ENCODE measurements at regions of chr2 and their contacts with region 1.

Region 1: GRCh38 chr2:181904022-181904632 is 12.6 kb downstream of the ITPRID2 start:
- DNase-seq: peak in 2 of 9 experiments; percentile 50 to 62
- ATAC-seq: peak; percentile 64
- H3K4me3 ChIP-seq: no peak overlapping the region
- H3K4me3 Mint-ChIP-seq: no peak overlapping the region
- H3K27ac ChIP-seq: no peak overlapping the region
- H3K27ac Mint-ChIP-seq: no peak overlapping the region
- H3K4me1 ChIP-seq: peaks cover 4% of the 10 kb centered on the region
- H3K4me1 Mint-ChIP-seq: peaks cover 25% of the 10 kb centered on the region
- H3K27me3 ChIP-seq: no peaks in the 10 kb centered on the region
- H3K27me3 Mint-ChIP-seq: no peaks in the 10 kb centered on the region
- CTCF ChIP-seq: peak; percentile 77

Region 2: GRCh38 chr2:180970016-180970415 is 934.1 kb before region 1 on chr2:
- CTCF ChIA-PET with region 1: no interaction called
- POLR2A ChIA-PET with region 1: no interaction called
- intact Hi-C with region 1: loop called in 1 of 2 experiments (anchors 5 kb)
- DNase-seq: no peak
- ATAC-seq: no peak
- H3K4me3 ChIP-seq: no peak overlapping the region
- H3K4me3 Mint-ChIP-seq: no peak overlapping the region
- H3K27ac ChIP-seq: no peak overlapping the region
- H3K27ac Mint-ChIP-seq: no peak overlapping the region
- H3K4me1 ChIP-seq: no peaks in the 10 kb centered on the region
- H3K4me1 Mint-ChIP-seq: no peaks in the 10 kb centered on the region
- H3K27me3 ChIP-seq: no peaks in the 10 kb centered on the region
- H3K27me3 Mint-ChIP-seq: no peaks in the 10 kb centered on the region
- CTCF ChIP-seq: no peak

Region 3: DNA sequence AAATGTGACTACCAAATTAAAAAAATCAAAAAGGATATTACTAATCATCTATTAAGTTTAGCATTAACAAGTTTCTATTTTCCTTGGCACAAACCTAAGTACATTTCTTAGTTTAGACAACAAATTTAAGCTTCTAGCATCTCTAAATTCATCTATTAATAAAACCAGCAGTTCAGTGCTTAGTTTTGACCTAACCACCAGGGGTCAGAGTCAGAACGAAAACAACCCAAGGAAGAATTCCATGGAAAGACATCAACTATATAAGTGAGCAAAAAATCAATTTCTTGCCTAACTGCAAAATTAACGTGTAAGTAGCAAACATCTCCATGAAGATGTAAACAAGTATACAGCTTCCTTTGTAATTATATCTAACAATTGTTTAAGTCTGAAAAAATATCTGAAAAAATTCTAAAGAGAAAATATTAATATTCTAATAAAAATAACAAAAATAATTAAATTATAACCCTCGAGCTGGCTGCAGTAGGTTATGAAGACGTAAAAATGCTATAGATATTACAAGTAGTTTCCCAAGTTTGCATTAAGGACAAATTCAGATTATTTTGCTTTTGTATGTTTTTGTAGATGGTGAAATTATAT is 330.9 kb before region 1 on chr2:
- CTCF ChIA-PET with region 1: no interaction called
- POLR2A ChIA-PET with region 1: no interaction called
- intact Hi-C with region 1: loop called in 1 of 2 experiments (anchors 10 kb)
- DNase-seq: peak in 2 of 9 experiments; percentile 11 to 28
- ATAC-seq: no peak
- H3K4me3 ChIP-seq: no peak overlapping the region
- H3K4me3 Mint-ChIP-seq: no peak overlapping the region
- H3K27ac ChIP-seq: no peak overlapping the region
- H3K27ac Mint-ChIP-seq: no peak overlapping the region
- H3K4me1 ChIP-seq: no peaks in the 10 kb centered on the region
- H3K4me1 Mint-ChIP-seq: no peaks in the 10 kb centered on the region
- H3K27me3 ChIP-seq: peaks cover 3% of the 10 kb centered on the region in 2 experiments
- H3K27me3 Mint-ChIP-seq: peaks cover 4% of the 10 kb centered on the region
- CTCF ChIP-seq: no peak

Region 4: DNA sequence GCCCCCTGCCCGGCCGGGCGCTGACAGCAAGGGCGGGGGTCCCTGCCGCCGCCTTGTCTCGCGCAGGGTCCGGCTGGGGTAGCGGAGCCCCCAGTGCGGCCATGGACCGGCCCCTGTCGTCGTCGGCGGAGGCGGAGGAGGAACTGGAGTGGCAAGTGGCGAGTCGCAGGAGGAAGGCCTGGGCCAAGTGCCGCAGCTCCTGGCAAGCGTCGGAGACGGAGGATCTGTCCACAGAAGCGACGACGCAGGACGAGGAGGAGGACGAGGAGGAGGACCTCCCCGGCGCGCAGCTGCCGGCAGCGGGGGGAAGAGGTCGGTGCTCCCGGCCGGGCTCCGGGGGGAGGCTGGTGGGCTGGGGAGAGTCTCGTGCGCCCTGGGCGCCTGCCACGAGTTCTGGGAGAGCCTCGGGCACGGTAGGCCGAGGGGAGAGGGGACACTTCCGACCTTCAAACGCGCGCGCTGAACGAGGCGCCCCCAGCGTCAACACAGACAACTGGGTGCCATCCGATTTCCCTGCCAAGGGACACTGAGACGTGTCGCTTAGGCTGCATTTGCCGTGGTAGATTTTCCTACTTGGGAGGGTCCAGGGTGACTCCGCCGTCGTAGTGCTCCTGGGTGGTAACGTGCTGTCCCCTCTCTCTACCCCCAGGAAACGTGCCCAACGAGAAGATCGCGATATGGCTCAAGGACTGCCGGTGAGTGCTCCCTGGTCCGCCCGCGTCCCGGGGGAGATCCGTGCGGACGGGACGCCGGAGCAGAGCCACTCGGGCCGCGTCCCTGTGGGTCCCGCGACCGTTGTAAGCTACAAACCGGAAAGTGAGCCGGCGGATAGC is 11.9 kb before region 1 on chr2:
- CTCF ChIA-PET with region 1: interaction called, 15 read pairs
- POLR2A ChIA-PET with region 1: no interaction called
- intact Hi-C with region 1: loop called in 1 of 2 experiments (anchors 2 kb)
- DNase-seq: peak; percentile 26 to 77 (median 61)
- ATAC-seq: peak; percentile 63
- H3K4me3 ChIP-seq: peak overlapping the region; percentile 80 to 85
- H3K4me3 Mint-ChIP-seq: peak overlapping the region; percentile 92
- H3K27ac ChIP-seq: peak overlapping the region; percentile 53 to 55
- H3K27ac Mint-ChIP-seq: peak overlapping the region; percentile 86
- H3K4me1 ChIP-seq: peaks cover 19% of the 10 kb centered on the region
- H3K4me1 Mint-ChIP-seq: peaks cover 39% of the 10 kb centered on the region
- H3K27me3 ChIP-seq: peaks cover 0 to 3% of the 10 kb centered on the region in 2 experiments
- H3K27me3 Mint-ChIP-seq: peaks cover 12% of the 10 kb centered on the region
- CTCF ChIP-seq: peak; percentile 14

Region 5: GRCh38 chr2:182229297-182229696 is 325.2 kb after region 1 on chr2:
- CTCF ChIA-PET with region 1: no interaction called
- POLR2A ChIA-PET with region 1: no interaction called
- intact Hi-C with region 1: no loop called
- DNase-seq: no peak
- ATAC-seq: no peak
- H3K4me3 ChIP-seq: no peak overlapping the region
- H3K4me3 Mint-ChIP-seq: no peak overlapping the region
- H3K27ac ChIP-seq: no peak overlapping the region
- H3K27ac Mint-ChIP-seq: no peak overlapping the region
- H3K4me1 ChIP-seq: no peaks in the 10 kb centered on the region
- H3K4me1 Mint-ChIP-seq: no peaks in the 10 kb centered on the region
- H3K27me3 ChIP-seq: peaks cover 0 to 5% of the 10 kb centered on the region in 2 experiments
- H3K27me3 Mint-ChIP-seq: peaks cover 2% of the 10 kb centered on the region
- CTCF ChIP-seq: no peak

Measured in CD8-positive, alpha-beta T cell (primary cell).